OCI-LY7 (cell line): ENCODE measurements at regions of chr17 and their contacts with region 1.

Region 1: GRCh38 chr17:69607162-69607834 is 192.8 kb downstream of the MAP2K6 start:
- DNase-seq: peak; percentile 84
- H3K4me3 ChIP-seq: no peak overlapping the region
- H3K27ac ChIP-seq: peak overlapping the region; percentile 13
- H3K4me1 ChIP-seq: peaks cover 49% of the 10 kb centered on the region
- CTCF ChIP-seq: peak; percentile 100

Region 2: DNA sequence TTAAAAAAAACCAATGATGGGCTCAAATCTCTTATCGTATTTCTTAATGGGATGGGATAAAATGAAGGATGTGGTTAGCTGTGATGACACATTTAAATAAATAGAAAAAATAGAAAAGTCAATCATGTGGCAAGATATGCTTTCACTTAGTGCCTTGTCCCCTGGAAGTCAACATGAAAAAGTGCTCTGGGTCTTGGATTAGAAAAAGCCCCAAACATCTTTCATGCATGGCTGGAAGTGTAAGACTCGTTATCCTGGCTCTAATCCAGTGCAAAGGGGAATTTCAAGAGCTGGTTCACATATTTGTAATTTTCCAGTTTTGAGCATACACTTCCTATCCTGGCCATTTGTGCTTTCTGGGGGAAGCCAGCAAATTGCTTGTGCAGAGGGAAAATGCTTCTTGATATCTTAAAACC is 31.9 kb before region 1 on chr17:
- CTCF ChIA-PET with region 1: interaction called, 10 read pairs
- POLR2A ChIA-PET with region 1: interaction called, 31 read pairs
- intact Hi-C with region 1: no loop called
- DNase-seq: peak; percentile 59
- H3K4me3 ChIP-seq: peak overlapping the region; percentile 7
- H3K27ac ChIP-seq: peak overlapping the region; percentile 94
- H3K4me1 ChIP-seq: peaks cover 94% of the 10 kb centered on the region
- CTCF ChIP-seq: no peak

Region 3: GRCh38 chr17:69637446-69638156 is 30.3 kb after region 1 on chr17:
- CTCF ChIA-PET with region 1: no interaction called
- POLR2A ChIA-PET with region 1: interaction called, 5 read pairs
- intact Hi-C with region 1: loop called (anchors 1 kb)
- DNase-seq: no peak
- H3K4me3 ChIP-seq: no peak overlapping the region
- H3K27ac ChIP-seq: no peak overlapping the region
- H3K4me1 ChIP-seq: no peaks in the 10 kb centered on the region
- CTCF ChIP-seq: no peak

Region 4: GRCh38 chr17:69672924-69673323 is 65.6 kb after region 1 on chr17:
- CTCF ChIA-PET with region 1: no interaction called
- POLR2A ChIA-PET with region 1: no interaction called
- intact Hi-C with region 1: no loop called
- DNase-seq: no peak
- H3K4me3 ChIP-seq: no peak overlapping the region
- H3K27ac ChIP-seq: no peak overlapping the region
- H3K4me1 ChIP-seq: no peaks in the 10 kb centered on the region
- CTCF ChIP-seq: no peak

Region 5: GRCh38 chr17:69834494-69834893 is 227.2 kb after region 1 on chr17:
- CTCF ChIA-PET with region 1: interaction called, 4 read pairs
- POLR2A ChIA-PET with region 1: interaction called, 3 read pairs
- intact Hi-C with region 1: loop called (anchors 5 kb)
- DNase-seq: no peak
- H3K4me3 ChIP-seq: no peak overlapping the region
- H3K27ac ChIP-seq: no peak overlapping the region
- H3K4me1 ChIP-seq: no peaks in the 10 kb centered on the region
- CTCF ChIP-seq: no peak

Region 6: DNA sequence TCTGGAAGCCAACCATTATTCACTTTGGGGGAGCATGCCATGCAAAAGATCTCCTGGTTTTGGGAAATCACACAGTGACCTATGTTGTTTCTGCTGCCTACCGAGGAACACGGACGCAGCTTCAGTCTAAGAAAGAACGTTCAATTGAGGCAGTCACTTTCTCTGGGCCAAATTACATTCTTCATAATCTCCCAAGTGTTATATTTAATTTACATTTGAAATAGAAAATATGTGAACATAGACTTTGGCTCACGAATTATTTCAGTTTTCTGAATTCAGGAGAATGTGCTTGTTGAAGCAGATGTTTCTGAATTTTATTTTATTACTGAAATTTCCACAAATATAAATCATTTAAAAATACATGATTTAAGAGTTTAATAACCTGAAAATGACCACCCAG is 374.1 kb after region 1 on chr17:
- CTCF ChIA-PET with region 1: no interaction called
- POLR2A ChIA-PET with region 1: no interaction called
- intact Hi-C with region 1: no loop called
- DNase-seq: no peak
- H3K4me3 ChIP-seq: no peak overlapping the region
- H3K27ac ChIP-seq: no peak overlapping the region
- H3K4me1 ChIP-seq: no peaks in the 10 kb centered on the region
- CTCF ChIP-seq: no peak

Region 7: GRCh38 chr17:70029019-70029767 is 421.9 kb after region 1 on chr17:
- CTCF ChIA-PET with region 1: no interaction called
- POLR2A ChIA-PET with region 1: no interaction called
- intact Hi-C with region 1: no loop called
- DNase-seq: no peak
- H3K4me3 ChIP-seq: no peak overlapping the region
- H3K27ac ChIP-seq: no peak overlapping the region
- H3K4me1 ChIP-seq: no peaks in the 10 kb centered on the region
- CTCF ChIP-seq: no peak

Region 8: DNA sequence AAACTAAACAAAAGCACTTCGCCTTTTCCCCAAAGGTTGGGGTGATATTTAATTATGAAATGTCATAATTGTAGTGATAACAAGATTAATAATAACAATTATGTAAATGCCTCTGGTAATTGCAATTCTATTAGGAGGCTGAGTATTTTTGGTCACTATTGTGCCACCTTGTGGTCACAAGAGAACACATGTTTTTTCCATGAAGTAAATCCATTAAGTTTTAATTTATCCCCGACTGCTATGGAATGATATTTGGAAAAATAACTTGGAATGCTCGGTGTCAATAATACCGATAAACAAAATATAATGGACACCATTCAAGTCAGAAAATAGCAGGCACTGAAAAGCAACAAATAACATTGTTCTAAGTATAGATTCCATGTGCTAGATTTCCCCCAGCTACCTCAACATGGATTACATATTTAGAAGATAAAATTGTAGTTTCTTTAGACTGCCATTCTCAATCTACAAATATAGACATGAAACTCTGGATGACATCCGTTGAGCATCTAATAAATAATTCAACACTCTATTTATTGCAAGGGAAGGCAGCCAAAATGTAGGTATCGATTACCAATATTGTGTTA is 537.1 kb after region 1 on chr17:
- CTCF ChIA-PET with region 1: interaction called, 4 read pairs
- POLR2A ChIA-PET with region 1: interaction called, 5 read pairs
- intact Hi-C with region 1: loop called (anchors 1 kb)
- DNase-seq: peak; percentile 56
- H3K4me3 ChIP-seq: no peak overlapping the region
- H3K27ac ChIP-seq: no peak overlapping the region
- H3K4me1 ChIP-seq: no peaks in the 10 kb centered on the region
- CTCF ChIP-seq: peak; percentile 100